Gastrocnemius medialis (tissue), 4 donors: ENCODE measurements at regions of chr9 and their contacts with region 1.

Region 1: GRCh38 chr9:124532897-124533296 is 25.7 kb upstream of the NR5A1 start:
- DNase-seq: no peak
- ATAC-seq: no peak
- H3K4me3 ChIP-seq: no peak overlapping the region
- H3K27ac ChIP-seq: no peak overlapping the region
- H3K4me1 ChIP-seq: no peaks in the 10 kb centered on the region
- H3K27me3 ChIP-seq: no peaks in the 10 kb centered on the region
- CTCF ChIP-seq: no peak
- POLR2A ChIP-seq: no peak

Region 2: DNA sequence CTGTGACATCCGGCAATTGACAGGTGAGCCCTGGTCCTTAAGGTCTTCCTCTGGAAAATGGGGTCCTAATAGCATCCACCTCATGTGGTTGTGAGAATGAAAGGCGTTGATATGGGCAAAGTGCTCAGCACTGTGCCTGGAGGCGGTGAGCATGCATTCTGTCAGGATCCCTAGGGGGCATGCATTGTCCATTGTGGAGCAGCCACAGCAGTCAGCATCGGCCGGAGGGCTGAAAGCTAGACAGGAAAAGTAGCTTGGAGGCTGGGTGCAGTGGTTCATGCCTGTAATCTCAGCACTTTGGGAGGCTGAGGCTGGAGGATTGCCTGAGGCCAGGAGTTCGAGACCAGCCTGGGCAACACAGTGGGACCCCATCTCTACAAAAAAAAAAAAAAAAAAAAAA is 399.2 kb before region 1 on chr9:
- in situ Hi-C with region 1: loop called in 3 of 4 experiments (anchors 10 kb)
- intact Hi-C with region 1: no loop called
- DNase-seq: no peak
- ATAC-seq: no peak
- H3K4me3 ChIP-seq: no peak overlapping the region
- H3K27ac ChIP-seq: no peak overlapping the region
- H3K4me1 ChIP-seq: no peaks in the 10 kb centered on the region
- H3K27me3 ChIP-seq: no peaks in the 10 kb centered on the region
- CTCF ChIP-seq: no peak
- POLR2A ChIP-seq: no peak

Region 3: GRCh38 chr9:124477806-124478285 is 55.1 kb before region 1 on chr9:
- in situ Hi-C with region 1: no loop called
- intact Hi-C with region 1: no loop called
- DNase-seq: no peak
- ATAC-seq: no peak
- H3K4me3 ChIP-seq: peak overlapping the region in 1 of 4 donors; percentile 17
- H3K27ac ChIP-seq: no peak overlapping the region
- H3K4me1 ChIP-seq: no peaks in the 10 kb centered on the region
- H3K27me3 ChIP-seq: peaks cover 38 to 52% (median 47%) of the 10 kb centered on the region in 3 donors
- CTCF ChIP-seq: no peak
- POLR2A ChIP-seq: no peak